ENCODE measurements at regions of chr2 and their contacts with region 1.

Region 1: DNA sequence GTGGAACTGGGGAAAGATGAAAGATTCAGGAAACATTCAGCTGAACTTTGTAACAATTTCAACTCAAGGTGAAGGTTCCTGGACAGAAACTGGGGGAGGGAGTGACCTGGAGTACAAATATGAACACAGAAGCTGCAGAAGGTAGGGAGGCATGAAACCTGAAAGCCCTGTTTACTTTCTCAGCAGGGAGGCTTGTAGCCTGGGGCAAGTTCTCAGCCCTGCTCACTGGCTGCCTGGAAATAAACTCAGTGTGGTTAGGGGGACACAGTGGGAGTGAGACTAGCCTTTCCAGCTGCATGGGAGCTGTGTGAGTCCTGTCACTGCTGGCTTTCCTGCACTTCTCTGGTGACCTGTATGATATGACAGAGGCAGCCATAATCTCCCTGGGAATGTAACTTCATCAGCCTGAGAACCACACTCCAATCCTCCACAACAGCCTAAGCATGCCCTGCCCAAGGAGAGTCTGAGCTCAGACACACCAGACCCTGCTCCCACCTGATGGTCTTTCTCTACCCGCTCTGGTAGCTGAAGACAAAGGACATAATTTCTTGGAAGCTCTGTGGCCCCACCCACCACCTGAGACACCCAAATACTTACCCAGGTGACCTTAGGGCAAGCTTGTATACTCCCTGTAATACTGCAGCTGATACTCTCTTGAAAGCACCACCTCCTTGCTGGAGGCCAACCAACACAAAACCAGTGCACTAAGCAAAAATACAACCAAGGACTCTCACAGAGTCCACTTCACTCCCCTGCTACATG is 76.9 kb downstream of the ZSWIM2 start:
- DNase-seq: peak; percentile 83 to 85
- H3K4me3 ChIP-seq: no peak overlapping the region
- H3K4me3 Mint-ChIP-seq: peak overlapping the region; percentile 42
- H3K27ac Mint-ChIP-seq: peak overlapping the region; percentile 88
- H3K4me1 ChIP-seq: peaks cover 26% of the 10 kb centered on the region
- H3K4me1 Mint-ChIP-seq: peaks cover 30% of the 10 kb centered on the region
- H3K27me3 ChIP-seq: no peaks in the 10 kb centered on the region
- H3K27me3 Mint-ChIP-seq: no peaks in the 10 kb centered on the region
- CTCF ChIP-seq: no peak

Region 2: GRCh38 chr2:186485871-186486650 is 286.0 kb before region 1 on chr2 and contains the start of gene ZC3H15:
- CTCF ChIA-PET with region 1: no interaction called
- POLR2A ChIA-PET with region 1: interaction called, 3 read pairs
- intact Hi-C with region 1: loop called (anchors 1 kb)
- DNase-seq: peak; percentile 97 to 98
- H3K4me3 ChIP-seq: peak within 1 kb of the TSS; percentile 86
- H3K4me3 Mint-ChIP-seq: peak within 1 kb of the TSS; percentile 96
- H3K27ac Mint-ChIP-seq: peak within 1 kb of the TSS; percentile 97
- H3K4me1 ChIP-seq: peaks cover 23% of the 10 kb centered on the region
- H3K4me1 Mint-ChIP-seq: peaks cover 27% of the 10 kb centered on the region
- H3K27me3 ChIP-seq: no peaks in the 10 kb centered on the region
- H3K27me3 Mint-ChIP-seq: no peaks in the 10 kb centered on the region
- CTCF ChIP-seq: no peak
- total RNA-seq, gene ZC3H15: 97.2 and 98.1 TPM in 2 replicates

Region 3: DNA sequence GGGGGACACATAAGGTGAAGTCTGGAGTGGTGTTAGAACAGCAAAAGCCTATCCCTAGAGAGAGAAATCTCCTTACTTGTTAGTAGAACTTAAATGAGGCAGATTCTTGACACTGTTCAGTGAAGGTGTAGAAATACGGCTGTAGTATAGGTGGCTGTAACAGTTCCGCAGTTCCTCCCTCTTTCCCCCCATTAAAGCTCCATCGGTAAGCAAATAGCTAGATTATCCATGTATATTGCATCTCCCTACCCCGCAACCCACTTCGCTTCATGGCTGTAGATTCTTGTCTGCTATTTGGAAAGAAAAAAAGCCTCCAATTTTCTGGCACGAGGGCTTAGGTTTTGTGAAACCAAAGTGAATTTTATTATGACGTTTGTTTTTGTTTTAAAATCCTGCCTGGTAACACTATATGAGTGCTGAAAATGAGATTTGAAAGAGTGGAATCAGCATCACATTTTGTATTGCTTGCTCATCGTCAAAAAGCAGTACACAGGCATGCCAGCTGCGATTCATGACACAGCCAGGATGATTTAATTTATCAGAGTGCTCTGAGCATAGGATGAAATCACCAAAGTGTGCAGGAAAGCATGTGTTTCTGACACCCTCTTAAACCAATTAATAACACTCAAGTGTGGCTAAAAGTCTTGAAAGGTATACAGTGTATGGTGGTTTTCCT is 76.8 kb before region 1 on chr2:
- CTCF ChIA-PET with region 1: no interaction called
- POLR2A ChIA-PET with region 1: no interaction called
- intact Hi-C with region 1: loop called (anchors 1 kb)
- DNase-seq: no peak
- H3K4me3 ChIP-seq: no peak overlapping the region
- H3K4me3 Mint-ChIP-seq: peak overlapping the region; percentile 91
- H3K27ac Mint-ChIP-seq: peak overlapping the region; percentile 79
- H3K4me1 ChIP-seq: peaks cover 12% of the 10 kb centered on the region
- H3K4me1 Mint-ChIP-seq: peaks cover 9% of the 10 kb centered on the region
- H3K27me3 ChIP-seq: no peaks in the 10 kb centered on the region
- H3K27me3 Mint-ChIP-seq: no peaks in the 10 kb centered on the region
- CTCF ChIP-seq: no peak

Region 4: GRCh38 chr2:186717320-186718007 is 54.6 kb before region 1 on chr2:
- CTCF ChIA-PET with region 1: no interaction called
- POLR2A ChIA-PET with region 1: no interaction called
- intact Hi-C with region 1: loop called (anchors 5 kb)
- DNase-seq: no peak
- H3K4me3 ChIP-seq: no peak overlapping the region
- H3K4me3 Mint-ChIP-seq: no peak overlapping the region
- H3K27ac Mint-ChIP-seq: no peak overlapping the region
- H3K4me1 ChIP-seq: no peaks in the 10 kb centered on the region
- H3K4me1 Mint-ChIP-seq: no peaks in the 10 kb centered on the region
- H3K27me3 ChIP-seq: no peaks in the 10 kb centered on the region
- H3K27me3 Mint-ChIP-seq: no peaks in the 10 kb centered on the region
- CTCF ChIP-seq: no peak

Region 5: DNA sequence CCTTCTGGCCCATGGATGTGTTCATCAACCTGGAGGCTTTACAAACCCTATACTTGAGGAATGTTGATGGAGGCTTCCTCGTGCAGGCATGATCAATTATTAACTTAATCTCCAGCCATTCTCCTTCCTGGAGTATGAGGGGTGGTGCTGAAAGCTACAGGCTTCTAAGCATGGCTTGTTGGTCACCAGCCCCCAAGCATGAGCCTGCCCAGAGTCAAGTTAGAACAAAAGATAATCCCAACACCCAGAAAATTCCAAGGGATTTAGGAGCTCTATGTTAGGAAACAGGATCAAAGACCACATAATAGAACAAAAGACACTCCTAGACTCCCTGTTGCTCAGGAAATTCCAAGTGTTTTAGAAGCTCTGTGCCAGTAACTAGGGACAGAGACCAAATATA is 15.0 kb before region 1 on chr2:
- CTCF ChIA-PET with region 1: interaction called, 3 read pairs
- POLR2A ChIA-PET with region 1: no interaction called
- intact Hi-C with region 1: loop called (anchors 1 kb)
- DNase-seq: peak; percentile 77 to 78
- H3K4me3 ChIP-seq: no peak overlapping the region
- H3K4me3 Mint-ChIP-seq: peak overlapping the region; percentile 37
- H3K27ac Mint-ChIP-seq: peak overlapping the region; percentile 66
- H3K4me1 ChIP-seq: peaks cover 26% of the 10 kb centered on the region
- H3K4me1 Mint-ChIP-seq: peaks cover 22% of the 10 kb centered on the region
- H3K27me3 ChIP-seq: no peaks in the 10 kb centered on the region
- H3K27me3 Mint-ChIP-seq: no peaks in the 10 kb centered on the region
- CTCF ChIP-seq: no peak

Region 6: DNA sequence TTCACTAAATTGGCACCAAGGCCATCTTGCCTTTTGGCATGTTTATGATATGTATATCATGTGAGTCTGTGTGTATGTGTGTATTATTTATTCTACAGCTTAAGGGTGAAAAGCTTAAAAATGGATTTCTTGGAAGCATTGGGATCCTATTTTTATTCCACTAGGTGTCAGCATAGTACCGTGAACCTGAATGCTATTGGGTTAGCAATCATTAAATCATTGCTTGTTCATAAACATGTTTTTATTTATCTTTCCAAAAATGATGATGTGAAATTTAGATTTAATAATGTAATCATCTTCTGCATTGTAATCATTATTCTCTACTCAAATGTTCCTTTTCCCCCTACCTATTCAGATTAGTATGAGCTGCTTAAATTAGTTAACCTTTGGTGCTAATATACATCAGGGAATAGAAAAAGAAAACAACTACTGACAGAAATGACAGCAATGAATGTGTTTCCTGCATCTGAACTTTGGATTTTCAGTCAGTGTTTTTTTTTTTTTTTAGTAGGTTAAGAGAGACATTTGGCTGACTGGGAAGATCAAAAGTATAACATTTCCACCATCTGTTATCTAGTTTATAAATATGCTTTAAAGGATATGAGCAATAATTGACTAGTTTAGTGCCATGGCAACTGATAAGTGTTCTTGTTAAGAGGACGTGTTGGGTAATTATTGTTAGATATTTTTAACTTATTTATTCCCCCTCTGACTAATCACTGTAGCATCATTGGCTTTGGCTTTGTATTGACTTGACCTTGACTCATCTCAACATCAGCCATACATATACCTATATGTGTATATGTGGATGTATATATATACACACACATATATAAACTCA is 91.1 kb after region 1 on chr2:
- CTCF ChIA-PET with region 1: no interaction called
- POLR2A ChIA-PET with region 1: no interaction called
- intact Hi-C with region 1: no loop called
- DNase-seq: peak in 1 of 2 experiments; percentile 24
- H3K4me3 ChIP-seq: no peak overlapping the region
- H3K4me3 Mint-ChIP-seq: no peak overlapping the region
- H3K27ac Mint-ChIP-seq: no peak overlapping the region
- H3K4me1 ChIP-seq: no peaks in the 10 kb centered on the region
- H3K4me1 Mint-ChIP-seq: no peaks in the 10 kb centered on the region
- H3K27me3 ChIP-seq: no peaks in the 10 kb centered on the region
- H3K27me3 Mint-ChIP-seq: peaks cover 8% of the 10 kb centered on the region
- CTCF ChIP-seq: peak; percentile 54 to 73

Measured in Caco-2 (cell line).